Activated CD4-positive, alpha-beta memory T cell treated with anti-CD3 and anti-CD28 coated beads, Interleukin-2, amount 10 ng/mL, durations not matched to agents 7 days and 5 days (primary cell): ENCODE measurements at regions of chr1 and their contacts with region 1.

Region 1: DNA sequence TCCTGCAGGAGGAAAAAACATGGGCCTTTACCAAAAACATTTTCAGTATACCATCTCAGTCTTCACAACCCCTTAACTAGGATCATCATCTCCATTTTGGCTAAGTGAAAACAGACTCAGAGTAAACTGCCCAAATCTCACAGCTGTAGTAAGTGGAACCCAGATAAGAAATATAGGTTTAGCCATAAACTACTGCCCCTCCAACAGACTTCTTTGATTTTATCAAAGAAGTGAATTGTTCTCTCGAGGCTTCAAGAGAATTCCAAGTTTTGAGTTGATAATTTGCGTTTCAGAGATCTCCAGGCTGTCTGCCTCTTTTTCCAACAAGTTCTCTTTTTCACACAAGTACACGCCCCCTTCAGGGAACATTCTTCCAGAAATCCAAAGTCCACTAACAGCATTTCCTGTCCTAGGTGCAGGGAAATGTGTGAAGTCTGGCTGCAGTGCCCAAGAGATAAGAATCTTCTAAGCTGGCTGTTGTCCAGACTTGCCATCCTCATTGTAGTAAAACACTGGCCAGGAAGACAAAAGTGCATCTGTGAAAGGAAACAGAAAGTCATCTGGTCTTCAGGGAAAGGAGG is 30.8 kb downstream of the RNF19B start:
- DNase-seq: no peak
- H3K4me3 Mint-ChIP-seq: no peak overlapping the region
- H3K27ac Mint-ChIP-seq: no peak overlapping the region
- H3K4me1 Mint-ChIP-seq: peaks cover 38% of the 10 kb centered on the region
- H3K27me3 Mint-ChIP-seq: no peaks in the 10 kb centered on the region

Region 2: GRCh38 chr1:32919811-32920733 is 13.8 kb before region 1 on chr1:
- CTCF ChIA-PET with region 1: no interaction called
- POLR2A ChIA-PET with region 1: no interaction called
- DNase-seq: no peak
- H3K4me3 Mint-ChIP-seq: no peak overlapping the region
- H3K27ac Mint-ChIP-seq: no peak overlapping the region
- H3K4me1 Mint-ChIP-seq: peaks cover 28% of the 10 kb centered on the region
- H3K27me3 Mint-ChIP-seq: peaks cover 48% of the 10 kb centered on the region

Region 3: GRCh38 chr1:32944180-32944579 is 10.3 kb after region 1 on chr1:
- CTCF ChIA-PET with region 1: interaction called, 10 read pairs
- POLR2A ChIA-PET with region 1: interaction called, 3 read pairs
- DNase-seq: no peak
- H3K4me3 Mint-ChIP-seq: no peak overlapping the region
- H3K27ac Mint-ChIP-seq: no peak overlapping the region
- H3K4me1 Mint-ChIP-seq: peaks cover 41% of the 10 kb centered on the region
- H3K27me3 Mint-ChIP-seq: no peaks in the 10 kb centered on the region

Region 4: DNA sequence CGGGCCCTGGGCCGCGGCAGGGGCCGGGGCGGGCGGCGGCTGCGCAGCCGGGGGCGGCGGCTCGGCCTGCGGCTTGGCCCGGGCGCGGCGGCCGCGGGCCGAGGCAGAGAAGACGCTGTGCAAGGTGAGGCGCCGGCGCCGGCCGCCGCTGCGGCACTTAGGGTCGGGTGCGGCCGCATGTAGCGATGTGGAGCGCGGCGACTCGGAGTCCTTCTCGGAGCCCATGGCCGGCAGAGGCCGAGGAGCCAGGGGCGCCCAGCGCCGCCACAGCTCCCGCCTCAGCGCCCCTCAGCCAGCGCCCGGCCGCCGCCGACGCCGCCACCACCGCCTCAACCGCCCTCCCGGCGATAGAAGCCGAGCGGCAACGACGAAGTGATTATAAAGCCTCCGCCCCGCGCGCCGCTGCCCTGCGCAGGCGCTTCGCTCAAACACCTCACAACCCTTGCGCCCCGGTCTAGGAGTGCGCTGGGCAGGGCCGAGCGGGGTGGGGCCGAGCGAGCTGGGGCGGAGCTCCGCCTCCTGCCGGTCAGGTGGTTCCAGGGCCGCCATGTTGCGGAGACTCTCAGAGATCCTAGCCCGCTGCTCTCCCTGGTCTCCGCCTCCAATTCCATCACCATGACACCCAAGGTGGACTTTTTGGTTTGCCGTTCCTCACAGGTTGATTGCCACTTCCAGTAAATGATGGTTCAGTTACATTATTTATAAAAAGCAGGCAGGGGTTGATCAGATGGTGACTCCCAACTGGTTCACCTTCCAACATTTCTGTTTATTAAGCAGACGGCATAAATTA is 30.8 kb after region 1 on chr1 and contains the start of gene RNF19B:
- CTCF ChIA-PET with region 1: interaction called, 11 read pairs
- POLR2A ChIA-PET with region 1: interaction called, 6 read pairs
- DNase-seq: peak; percentile 96
- H3K4me3 Mint-ChIP-seq: peak within 1 kb of the TSS; percentile 79
- H3K27ac Mint-ChIP-seq: peak within 1 kb of the TSS; percentile 85
- H3K4me1 Mint-ChIP-seq: peaks cover 60% of the 10 kb centered on the region
- H3K27me3 Mint-ChIP-seq: peaks cover 3% of the 10 kb centered on the region
- total RNA-seq, gene RNF19B: 42.9 to 46.9 TPM

Region 5: GRCh38 chr1:33007190-33008050 is 73.6 kb after region 1 on chr1:
- CTCF ChIA-PET with region 1: interaction called, 32 read pairs
- POLR2A ChIA-PET with region 1: no interaction called
- DNase-seq: no peak
- H3K4me3 Mint-ChIP-seq: no peak overlapping the region
- H3K27ac Mint-ChIP-seq: no peak overlapping the region
- H3K4me1 Mint-ChIP-seq: peaks cover 20% of the 10 kb centered on the region
- H3K27me3 Mint-ChIP-seq: no peaks in the 10 kb centered on the region

Region 6: DNA sequence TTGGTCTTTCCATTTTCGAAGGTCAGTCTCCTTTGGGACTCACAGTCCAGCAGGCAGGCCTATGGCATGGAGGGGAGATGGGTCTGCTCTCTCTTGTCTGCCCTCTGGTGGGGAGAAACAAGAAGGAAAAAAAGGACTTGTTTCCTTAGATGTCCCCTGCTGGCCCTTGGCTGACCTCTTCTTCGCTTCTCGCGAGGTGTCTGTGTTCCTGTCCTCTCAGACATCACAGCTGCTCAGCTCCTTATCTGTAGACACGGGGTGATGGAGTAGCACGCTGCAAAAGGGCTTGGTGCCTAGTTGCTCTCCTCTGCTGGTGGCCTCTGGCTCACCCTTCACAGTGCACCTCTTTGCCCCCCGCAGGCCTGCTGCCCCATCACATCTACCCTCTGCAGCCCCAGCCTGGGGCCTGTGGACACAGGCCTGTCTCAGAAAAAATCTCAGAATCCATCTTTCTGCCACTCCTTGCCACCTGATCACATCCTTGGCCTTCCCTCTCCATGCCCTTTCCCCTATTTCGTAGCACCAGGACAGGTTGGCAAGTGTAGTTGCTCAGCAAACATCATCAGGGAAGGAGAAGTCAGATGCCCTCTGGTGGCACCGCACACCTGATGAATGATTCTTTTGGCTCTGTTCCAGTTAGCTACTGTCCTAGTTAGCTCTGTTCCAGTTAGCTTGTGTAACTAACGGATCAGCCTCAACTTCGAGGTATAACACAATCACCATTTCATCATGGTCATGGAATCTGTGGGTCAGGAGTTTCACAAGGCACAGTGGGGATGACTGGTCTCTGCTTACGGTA is 121.6 kb after region 1 on chr1:
- CTCF ChIA-PET with region 1: interaction called, 82 read pairs
- POLR2A ChIA-PET with region 1: interaction called, 6 read pairs
- DNase-seq: peak; percentile 34
- H3K4me3 Mint-ChIP-seq: no peak overlapping the region
- H3K27ac Mint-ChIP-seq: no peak overlapping the region
- H3K4me1 Mint-ChIP-seq: peaks cover 8% of the 10 kb centered on the region
- H3K27me3 Mint-ChIP-seq: peaks cover 4% of the 10 kb centered on the region

Region 7: DNA sequence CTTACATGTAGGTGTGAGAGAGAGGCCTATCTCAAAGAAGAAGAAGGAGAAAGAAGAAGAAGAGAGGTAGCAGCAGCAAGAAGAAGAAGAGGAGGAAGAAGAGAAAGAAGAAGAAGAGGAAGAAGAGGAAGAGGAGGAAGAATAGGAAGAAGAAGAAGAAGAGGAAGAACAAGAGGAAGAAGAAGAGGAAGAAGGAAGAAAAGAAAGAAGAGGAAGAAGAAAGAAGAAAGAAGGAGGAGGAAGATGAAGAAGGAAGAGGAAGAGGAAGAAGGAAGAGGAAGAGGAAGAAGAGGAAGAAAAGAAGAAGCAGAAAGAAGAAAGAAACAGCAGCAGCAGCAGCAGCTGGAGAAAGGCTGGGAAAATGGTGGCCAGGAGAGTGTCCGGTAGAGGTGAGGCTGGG is 136.8 kb after region 1 on chr1:
- CTCF ChIA-PET with region 1: no interaction called
- POLR2A ChIA-PET with region 1: no interaction called
- DNase-seq: no peak
- H3K4me3 Mint-ChIP-seq: no peak overlapping the region
- H3K27ac Mint-ChIP-seq: no peak overlapping the region
- H3K4me1 Mint-ChIP-seq: peaks cover 8% of the 10 kb centered on the region
- H3K27me3 Mint-ChIP-seq: peaks cover 24% of the 10 kb centered on the region

Region 8: DNA sequence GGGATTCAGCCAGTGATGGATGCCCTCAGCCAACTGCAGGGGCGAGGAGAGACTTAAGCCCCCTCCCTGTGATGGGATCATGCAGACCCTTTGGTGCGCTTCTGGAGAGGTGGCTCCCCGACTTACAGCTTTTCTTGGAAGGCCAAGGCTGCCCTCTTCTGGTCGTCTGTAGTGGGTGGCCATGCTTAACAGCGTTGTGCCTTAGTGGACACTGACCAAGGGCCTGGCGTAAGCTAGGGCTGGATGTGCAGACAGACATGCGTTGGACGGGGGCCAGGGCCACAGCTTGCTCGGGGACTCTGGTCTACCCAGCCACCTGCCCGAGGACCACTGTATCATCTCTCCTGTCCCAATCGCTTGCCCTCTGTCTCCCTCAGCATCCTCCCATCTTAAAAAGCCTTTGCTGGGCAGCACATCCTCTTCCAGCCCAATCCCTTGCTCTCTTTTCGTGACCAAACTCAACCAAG is 152.6 kb after region 1 on chr1:
- CTCF ChIA-PET with region 1: interaction called, 14 read pairs
- POLR2A ChIA-PET with region 1: interaction called, 3 read pairs
- DNase-seq: peak; percentile 56
- H3K4me3 Mint-ChIP-seq: no peak overlapping the region
- H3K27ac Mint-ChIP-seq: no peak overlapping the region
- H3K4me1 Mint-ChIP-seq: peaks cover 32% of the 10 kb centered on the region
- H3K27me3 Mint-ChIP-seq: peaks cover 16% of the 10 kb centered on the region